ENCODE measurements at regions of chr19 and their contacts with region 1.

Region 1: DNA sequence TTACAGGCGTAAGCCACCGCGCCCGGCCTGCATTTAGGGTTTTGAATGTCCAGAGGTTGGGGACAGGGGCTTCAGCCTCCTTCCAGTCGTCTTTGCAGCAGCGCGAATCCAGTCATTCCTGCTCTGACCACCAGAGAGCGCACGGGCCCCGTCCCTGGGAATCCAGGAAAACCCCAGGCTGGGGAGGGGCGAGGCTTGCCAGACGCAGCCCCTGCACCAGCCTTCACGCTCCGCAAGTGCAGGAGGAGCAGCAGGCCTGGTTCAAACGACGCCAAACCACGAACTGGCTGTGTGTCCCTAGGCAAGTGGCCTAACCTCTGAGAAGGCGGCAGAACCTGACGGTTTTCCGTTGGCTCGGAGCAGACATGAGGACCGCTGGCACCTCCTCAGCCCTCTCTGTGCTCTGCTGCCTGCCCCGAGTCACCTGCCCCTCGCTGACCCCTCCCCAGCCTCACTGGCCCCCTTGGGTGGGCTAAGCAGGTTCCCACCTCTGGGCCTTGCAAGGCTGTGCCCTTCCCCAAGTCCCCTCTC is 2.0 kb upstream of the RNF126 start:
- DNase-seq: peak; percentile 83
- H3K4me3 ChIP-seq: no peak overlapping the region
- H3K27ac ChIP-seq: no peak overlapping the region
- H3K4me1 ChIP-seq: peaks cover 34% of the 10 kb centered on the region
- H3K27me3 ChIP-seq: no peaks in the 10 kb centered on the region
- CTCF ChIP-seq: peak; percentile 82 to 96 (median 90)
- POLR2A ChIP-seq: no peak

Region 2: GRCh38 chr19:732148-733069 is 67.4 kb after region 1 on chr19:
- intact Hi-C with region 1: loop called (anchors 5 kb)
- DNase-seq: no peak
- H3K4me3 ChIP-seq: no peak overlapping the region
- H3K27ac ChIP-seq: no peak overlapping the region
- H3K4me1 ChIP-seq: no peaks in the 10 kb centered on the region
- H3K27me3 ChIP-seq: no peaks in the 10 kb centered on the region
- CTCF ChIP-seq: no peak
- POLR2A ChIP-seq: no peak

Region 3: GRCh38 chr19:743168-743687 is 78.2 kb after region 1 on chr19:
- intact Hi-C with region 1: no loop called
- DNase-seq: peak; percentile 80
- H3K4me3 ChIP-seq: no peak overlapping the region
- H3K27ac ChIP-seq: no peak overlapping the region
- H3K4me1 ChIP-seq: no peaks in the 10 kb centered on the region
- H3K27me3 ChIP-seq: no peaks in the 10 kb centered on the region
- CTCF ChIP-seq: no peak
- POLR2A ChIP-seq: no peak